MCF 10A (cell line): ENCODE measurements at regions of chr4 and their contacts with region 1.

Region 1: DNA sequence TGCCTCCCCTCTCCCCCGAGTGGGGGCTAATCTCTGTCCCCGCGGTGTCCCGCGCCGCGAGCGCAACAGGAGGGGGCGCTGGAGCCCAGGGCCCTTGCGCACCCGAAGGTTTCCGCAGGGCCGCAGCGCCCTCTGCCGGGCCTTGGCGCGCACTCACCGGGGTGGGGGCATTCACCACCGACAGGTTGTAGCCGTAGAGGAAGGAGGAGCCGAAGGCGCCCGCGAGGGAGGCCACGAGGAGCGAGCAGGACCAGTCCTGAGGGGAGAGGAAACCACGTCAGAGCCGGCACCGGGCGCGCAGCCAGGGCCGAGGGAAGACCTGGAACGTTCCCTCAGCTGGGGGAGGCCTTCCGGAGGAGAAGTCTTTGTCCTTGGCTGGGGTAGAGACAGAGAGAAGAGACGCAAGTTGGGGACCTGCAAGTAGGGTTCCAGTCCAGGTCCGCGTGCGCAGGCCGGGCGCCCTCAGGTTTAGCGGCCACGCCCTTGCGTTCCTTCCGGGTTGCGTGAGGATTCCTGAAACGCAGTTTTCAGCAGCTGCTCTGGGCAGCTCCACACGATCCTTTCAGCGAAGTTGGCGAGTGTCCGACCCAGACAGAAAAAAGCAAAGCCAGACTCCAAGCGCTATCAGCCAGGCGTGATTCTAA is 2.4 kb downstream of the SLC2A9 start:
- DNase-seq: peak; percentile 98
- H3K4me3 Mint-ChIP-seq: peak overlapping the region; percentile 80
- H3K27ac Mint-ChIP-seq: peak overlapping the region; percentile 97
- H3K4me1 Mint-ChIP-seq: peaks cover 48% of the 10 kb centered on the region
- H3K27me3 Mint-ChIP-seq: no peaks in the 10 kb centered on the region
- CTCF ChIP-seq: peak; percentile 99

Region 2: DNA sequence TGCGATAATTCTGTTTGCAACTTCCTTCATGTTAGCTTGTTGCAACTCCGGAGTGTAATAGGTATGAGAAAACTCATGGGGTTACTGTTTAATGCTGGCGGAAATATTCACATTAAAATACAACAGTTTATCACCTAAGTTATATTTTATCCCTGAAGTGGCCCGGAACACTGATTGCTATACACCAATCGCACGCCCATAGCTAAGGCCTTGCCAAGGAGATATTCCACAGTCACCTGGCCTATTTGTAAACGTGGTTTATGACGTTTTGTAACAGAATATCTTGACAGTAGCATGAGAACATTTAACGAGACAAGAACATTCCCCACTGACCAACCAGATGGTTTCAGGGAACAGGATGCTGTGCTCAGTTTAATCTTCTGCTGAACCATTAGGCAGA is 872.0 kb before region 1 on chr4:
- CTCF ChIA-PET with region 1: no interaction called
- POLR2A ChIA-PET with region 1: no interaction called
- intact Hi-C with region 1: loop called (anchors 5 kb)
- DNase-seq: no peak
- H3K4me3 Mint-ChIP-seq: no peak overlapping the region
- H3K27ac Mint-ChIP-seq: no peak overlapping the region
- H3K4me1 Mint-ChIP-seq: no peaks in the 10 kb centered on the region
- H3K27me3 Mint-ChIP-seq: no peaks in the 10 kb centered on the region
- CTCF ChIP-seq: no peak

Region 3: DNA sequence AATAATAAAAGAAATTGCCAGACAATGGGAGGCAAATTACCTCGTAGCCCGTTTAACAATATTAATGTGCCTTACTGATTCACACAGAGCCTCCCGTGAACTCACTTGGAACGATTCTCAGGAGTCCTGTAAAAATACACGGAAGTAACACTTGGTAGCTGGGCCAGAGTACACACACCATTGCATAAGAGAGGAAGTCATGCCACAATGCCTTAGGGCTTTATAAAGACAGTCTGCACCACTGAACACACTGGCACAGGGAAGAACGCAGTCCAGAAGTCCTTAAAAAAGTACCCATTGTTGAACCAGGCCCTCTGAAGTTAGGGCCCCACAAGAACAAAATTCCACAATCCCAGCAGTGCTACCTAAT is 12.7 kb before region 1 on chr4:
- CTCF ChIA-PET with region 1: interaction called, 75 read pairs
- POLR2A ChIA-PET with region 1: interaction called, 31 read pairs
- intact Hi-C with region 1: no loop called
- DNase-seq: peak; percentile 96
- H3K4me3 Mint-ChIP-seq: peak overlapping the region; percentile 55
- H3K27ac Mint-ChIP-seq: peak overlapping the region; percentile 82
- H3K4me1 Mint-ChIP-seq: peaks cover 44% of the 10 kb centered on the region
- H3K27me3 Mint-ChIP-seq: no peaks in the 10 kb centered on the region
- CTCF ChIP-seq: no peak

Region 4: DNA sequence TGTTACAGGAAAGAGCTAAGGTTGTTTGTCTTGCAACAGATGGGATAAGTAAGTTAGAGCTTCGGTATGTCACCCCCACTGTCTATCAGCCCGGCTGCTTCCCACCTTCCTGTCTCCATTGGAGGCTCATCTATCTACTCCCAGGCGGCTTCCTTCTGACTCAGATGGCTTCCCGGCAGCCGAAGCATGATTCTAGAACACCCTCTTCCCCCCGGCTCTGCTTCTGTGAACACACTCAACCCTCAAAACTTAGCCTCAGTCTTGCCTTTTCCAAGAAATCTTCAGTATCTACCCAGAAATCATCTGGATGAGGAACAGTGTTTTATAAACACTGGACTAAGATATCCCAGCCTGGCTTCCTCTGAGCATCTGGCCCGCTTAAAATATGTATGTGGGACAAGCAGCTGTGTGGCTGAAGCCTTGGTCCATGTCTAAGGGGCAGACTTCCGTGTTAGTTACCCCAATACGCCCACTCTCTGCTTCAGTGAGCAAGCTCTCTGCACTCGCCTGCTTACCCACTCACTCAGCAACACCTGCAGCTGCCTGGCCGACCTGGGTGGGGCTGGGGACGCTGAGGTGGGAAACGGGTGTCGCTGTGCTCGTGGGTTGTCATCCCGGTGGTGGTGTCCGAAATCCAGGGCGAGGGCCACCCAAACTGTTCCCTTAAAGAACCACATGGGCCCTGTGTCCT is 14.4 kb after region 1 on chr4:
- CTCF ChIA-PET with region 1: interaction called, 10 read pairs
- POLR2A ChIA-PET with region 1: interaction called, 28 read pairs
- intact Hi-C with region 1: no loop called
- DNase-seq: peak; percentile 67
- H3K4me3 Mint-ChIP-seq: no peak overlapping the region
- H3K27ac Mint-ChIP-seq: no peak overlapping the region
- H3K4me1 Mint-ChIP-seq: peaks cover 27% of the 10 kb centered on the region
- H3K27me3 Mint-ChIP-seq: no peaks in the 10 kb centered on the region
- CTCF ChIP-seq: no peak

Region 5: GRCh38 chr4:10140866-10141759 is 122.2 kb after region 1 on chr4:
- CTCF ChIA-PET with region 1: no interaction called
- POLR2A ChIA-PET with region 1: no interaction called
- intact Hi-C with region 1: no loop called
- DNase-seq: no peak
- H3K4me3 Mint-ChIP-seq: no peak overlapping the region
- H3K27ac Mint-ChIP-seq: no peak overlapping the region
- H3K4me1 Mint-ChIP-seq: no peaks in the 10 kb centered on the region
- H3K27me3 Mint-ChIP-seq: peaks cover 9% of the 10 kb centered on the region
- CTCF ChIP-seq: no peak

Region 6: DNA sequence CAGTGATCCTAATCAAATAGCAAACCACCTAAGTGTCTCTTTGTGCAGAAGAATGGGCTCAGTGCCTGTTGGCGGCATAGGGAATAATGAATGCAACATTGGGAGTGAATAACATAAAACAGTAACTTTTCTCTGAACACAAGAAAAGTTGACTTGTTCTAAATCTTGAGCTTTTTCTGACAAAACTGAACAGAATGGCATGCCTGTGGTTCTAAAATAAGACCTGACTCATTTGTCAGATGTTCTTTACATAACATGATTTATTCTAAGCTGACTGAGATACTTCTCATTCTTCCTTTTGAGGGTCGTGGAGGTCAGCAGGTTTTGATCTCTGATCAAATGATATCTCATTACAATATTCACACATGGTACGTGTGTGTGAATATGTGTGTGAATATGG is 263.1 kb after region 1 on chr4:
- CTCF ChIA-PET with region 1: no interaction called
- POLR2A ChIA-PET with region 1: no interaction called
- intact Hi-C with region 1: no loop called
- DNase-seq: no peak
- H3K4me3 Mint-ChIP-seq: no peak overlapping the region
- H3K27ac Mint-ChIP-seq: no peak overlapping the region
- H3K4me1 Mint-ChIP-seq: peaks cover 5% of the 10 kb centered on the region
- H3K27me3 Mint-ChIP-seq: no peaks in the 10 kb centered on the region
- CTCF ChIP-seq: no peak